GM10248 (cell line): ENCODE measurements at regions of chr5 and their contacts with region 1.

Region 1: DNA sequence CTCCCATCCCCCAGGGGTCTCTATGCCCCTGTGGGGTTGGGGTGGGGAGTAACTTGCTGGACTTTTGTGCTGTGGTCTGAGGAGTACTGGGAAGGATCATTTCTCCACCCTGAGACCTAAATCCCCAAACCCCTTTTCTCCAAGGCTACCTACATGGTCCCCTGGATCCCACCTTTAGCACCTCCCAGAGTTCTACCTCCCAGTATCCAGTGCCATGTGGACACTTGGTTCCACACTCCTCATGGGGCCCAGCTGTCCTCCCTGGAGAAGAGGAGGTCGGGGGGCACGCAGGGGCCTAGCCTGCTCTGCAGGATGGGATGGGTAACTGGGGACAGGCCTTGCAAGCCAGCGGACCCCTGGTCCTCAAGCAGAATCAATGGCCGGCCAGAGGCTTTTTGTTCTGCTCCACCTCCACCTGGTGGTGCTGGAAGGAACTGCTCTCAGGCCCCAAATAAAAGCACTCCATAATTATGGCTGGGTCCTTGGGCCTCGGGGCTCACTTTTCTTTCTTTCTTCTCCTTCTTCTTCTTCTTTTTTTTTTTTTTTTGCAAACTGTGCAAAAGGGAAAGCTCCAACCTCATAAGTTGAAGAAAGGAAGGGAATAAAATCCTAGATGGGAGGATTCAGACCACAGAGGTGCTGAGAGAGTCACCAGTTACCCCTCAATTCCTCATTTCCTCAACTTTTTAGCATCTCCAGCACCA is 68.4 kb downstream of the PSD2 start:
- DNase-seq: peak; percentile 84
- CTCF ChIP-seq: peak; percentile 74

Region 2: DNA sequence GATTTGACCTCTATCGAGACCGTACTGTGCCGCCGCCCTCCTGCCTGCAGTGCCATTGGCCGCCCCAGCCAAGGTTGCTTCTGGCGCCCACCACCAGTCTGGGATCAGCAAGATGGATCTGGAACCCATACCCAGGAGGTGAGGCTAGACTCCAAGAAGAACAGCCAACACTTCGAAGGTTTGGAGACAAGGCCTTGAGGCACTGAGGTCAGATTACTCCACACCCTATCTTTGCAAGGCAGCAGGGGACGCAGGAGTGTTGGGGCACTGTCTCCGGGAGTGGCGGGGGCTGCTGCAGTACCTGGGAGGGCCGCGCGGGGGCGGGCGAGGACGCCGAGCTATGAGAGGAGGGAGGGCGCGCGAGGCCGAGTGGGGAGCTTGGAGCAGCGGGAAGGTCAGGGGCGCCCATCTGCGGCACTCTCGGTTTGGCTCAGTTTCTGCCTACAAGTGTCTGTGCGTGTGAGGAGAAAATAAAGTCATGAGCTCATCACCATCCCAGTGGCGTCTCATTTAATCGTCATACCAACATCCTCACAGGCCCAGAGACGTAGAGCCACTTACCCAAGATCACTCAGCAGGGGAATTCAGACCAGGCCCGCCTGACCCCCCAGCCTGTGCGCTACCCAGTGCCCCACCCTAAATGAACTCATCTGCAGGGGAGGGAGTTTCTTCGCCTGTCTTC is 88.9 kb before region 1 on chr5:
- CTCF ChIA-PET with region 1: interaction called, 18 read pairs
- POLR2A ChIA-PET with region 1: no interaction called
- DNase-seq: peak; percentile 88
- CTCF ChIP-seq: peak; percentile 88

Region 3: DNA sequence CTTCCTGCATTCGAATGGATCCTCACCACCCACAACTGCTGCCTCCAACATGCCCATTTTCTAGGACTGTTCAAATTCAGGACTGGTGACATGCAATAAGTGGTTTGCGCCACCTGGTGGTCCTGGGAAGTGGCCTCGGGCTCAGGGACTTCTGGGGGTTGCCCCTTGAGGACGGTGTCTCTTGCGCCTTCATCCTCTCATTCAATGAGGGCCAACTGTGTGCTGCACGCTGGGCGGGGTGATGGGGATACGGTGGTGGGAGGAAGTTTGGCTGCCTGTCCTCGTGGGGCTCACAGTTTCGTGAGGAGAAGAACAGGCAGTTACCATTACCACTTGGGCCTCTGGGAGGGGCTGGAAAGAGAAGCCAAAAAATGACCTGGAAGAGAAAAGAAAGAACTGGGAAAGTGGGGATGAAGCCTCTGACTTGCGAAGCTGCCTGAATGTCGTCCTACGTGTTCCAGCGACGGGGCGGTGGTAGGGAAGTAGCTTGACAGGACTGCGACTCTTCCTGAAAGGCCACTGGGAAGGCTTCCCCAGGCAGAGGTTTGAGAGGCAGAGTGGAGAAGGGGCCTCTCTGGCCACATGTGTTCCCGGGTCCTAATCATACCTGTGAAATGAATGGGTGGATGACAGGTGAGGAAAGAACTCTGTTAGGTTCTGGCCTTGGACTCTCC is 19.4 kb before region 1 on chr5:
- CTCF ChIA-PET with region 1: interaction called, 19 read pairs
- POLR2A ChIA-PET with region 1: no interaction called
- DNase-seq: peak; percentile 84
- CTCF ChIP-seq: peak; percentile 89

Region 4: GRCh38 chr5:140806834-140807775 is 943.1 kb after region 1 on chr5 and contains the start of gene PCDHA4:
- CTCF ChIA-PET with region 1: no interaction called
- POLR2A ChIA-PET with region 1: no interaction called
- DNase-seq: no peak
- CTCF ChIP-seq: peak; percentile 13